ENCODE measurements at regions of chr22 and their contacts with region 1.

Region 1: DNA sequence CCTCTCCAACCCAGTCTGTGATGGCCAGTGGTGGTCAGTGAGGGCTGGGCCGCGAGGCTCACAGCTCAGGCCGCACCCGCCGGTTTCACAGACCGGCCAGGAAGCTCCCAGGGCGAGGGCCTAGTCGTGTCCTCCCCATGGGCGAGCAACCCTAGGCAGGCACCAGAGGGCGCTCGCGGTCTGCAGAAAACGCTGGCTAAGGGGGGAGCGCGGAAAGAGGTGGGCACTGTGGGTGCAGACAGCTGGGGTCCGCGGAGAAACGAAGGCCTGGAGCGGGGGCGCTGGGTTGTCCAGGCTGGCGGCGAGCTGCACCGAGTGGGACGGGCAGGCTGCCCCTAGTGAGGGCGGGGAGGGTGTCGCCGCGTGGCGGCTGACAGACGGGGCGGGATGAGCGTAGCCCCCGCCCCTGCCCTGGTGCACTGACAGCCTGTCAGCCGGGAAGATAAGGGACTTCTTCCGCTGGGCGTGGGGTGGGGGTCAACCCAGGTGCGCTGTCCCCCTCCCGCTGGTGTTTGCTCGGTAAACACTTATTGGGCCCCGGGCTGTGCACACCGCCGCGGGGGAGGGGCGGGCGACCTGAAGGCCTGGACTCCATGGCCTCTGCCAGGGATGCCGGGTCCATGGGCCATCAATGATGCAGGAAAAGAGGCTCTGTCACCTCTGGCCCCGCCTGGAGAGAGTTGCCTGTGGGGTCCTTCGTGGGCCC is 7.5 kb downstream of the GP1BB start:
- DNase-seq: peak; percentile 86
- ATAC-seq: peak; percentile 90
- H3K4me3 ChIP-seq: peak overlapping the region in 4 of 5 experiments; percentile 10 to 45 (median 34)
- H3K4me3 Mint-ChIP-seq: peak overlapping the region; percentile 84
- H3K27ac ChIP-seq: no peak overlapping the region
- H3K27ac Mint-ChIP-seq: no peak overlapping the region
- H3K4me1 ChIP-seq: peaks cover 6 to 9% of the 10 kb centered on the region in 2 donors
- H3K4me1 Mint-ChIP-seq: peaks cover 2% of the 10 kb centered on the region
- H3K27me3 ChIP-seq: peaks cover 0 to 9% (median 0%) of the 10 kb centered on the region in 4 experiments
- H3K27me3 Mint-ChIP-seq: peaks cover 3% of the 10 kb centered on the region
- CTCF ChIP-seq: peak; percentile 93

Region 2: GRCh38 chr22:19527861-19528417 is 202.9 kb before region 1 on chr22:
- CTCF ChIA-PET with region 1: no interaction called
- POLR2A ChIA-PET with region 1: no interaction called
- intact Hi-C with region 1: no loop called
- DNase-seq: no peak
- ATAC-seq: no peak
- H3K4me3 ChIP-seq: no peak overlapping the region
- H3K4me3 Mint-ChIP-seq: no peak overlapping the region
- H3K27ac ChIP-seq: no peak overlapping the region
- H3K27ac Mint-ChIP-seq: no peak overlapping the region
- H3K4me1 ChIP-seq: peaks cover 8 to 22% of the 10 kb centered on the region in 2 donors
- H3K4me1 Mint-ChIP-seq: peaks cover 12% of the 10 kb centered on the region
- H3K27me3 ChIP-seq: peaks cover 0 to 38% (median 5%) of the 10 kb centered on the region in 4 experiments
- H3K27me3 Mint-ChIP-seq: peaks cover 30% of the 10 kb centered on the region
- CTCF ChIP-seq: no peak

Region 3: DNA sequence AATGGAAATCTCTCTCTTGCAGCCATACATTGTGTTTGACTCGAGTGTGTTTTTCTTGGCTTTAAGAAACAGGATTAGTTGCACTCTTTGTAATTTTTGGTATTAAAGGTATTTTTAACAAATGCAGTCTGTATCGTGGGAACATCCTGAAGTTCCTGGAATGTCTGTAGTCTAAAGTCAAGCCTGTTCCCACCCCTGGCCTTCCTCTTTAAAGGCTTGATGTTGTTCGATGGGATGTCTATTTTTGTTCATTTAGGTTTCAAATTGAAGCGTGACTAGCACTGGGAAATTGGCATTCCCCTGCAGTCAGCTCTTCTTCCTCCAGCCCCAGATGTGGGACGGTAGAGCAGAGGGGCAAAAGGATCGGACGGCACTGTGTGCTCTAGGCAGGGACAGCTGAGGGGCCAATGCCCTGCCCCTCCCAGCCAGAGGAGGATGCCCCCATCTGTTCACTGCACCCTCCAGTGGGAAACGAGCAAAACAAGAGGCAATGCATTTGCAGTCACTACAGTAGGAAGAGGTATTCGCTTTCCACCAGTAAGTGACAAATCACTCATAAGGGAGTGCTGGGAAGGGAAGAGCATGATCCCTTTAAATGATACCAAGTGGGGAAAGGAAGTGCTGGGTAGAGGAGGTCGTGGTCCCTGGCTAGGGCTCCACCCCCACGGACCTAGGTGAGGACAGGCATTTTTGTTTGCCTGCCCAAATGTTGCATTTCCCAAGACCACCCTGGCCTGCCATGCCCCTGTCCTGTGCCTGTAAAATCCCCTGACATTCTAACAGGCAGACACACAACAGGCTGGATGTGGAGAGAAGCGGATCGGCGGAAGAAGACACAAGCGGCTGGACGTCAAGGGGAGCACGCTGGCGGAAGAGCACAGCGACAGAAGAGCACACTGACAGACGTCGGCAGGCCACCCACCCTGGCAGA is 63.9 kb before region 1 on chr22:
- CTCF ChIA-PET with region 1: no interaction called
- POLR2A ChIA-PET with region 1: no interaction called
- intact Hi-C with region 1: no loop called
- DNase-seq: no peak
- ATAC-seq: no peak
- H3K4me3 ChIP-seq: no peak overlapping the region
- H3K4me3 Mint-ChIP-seq: no peak overlapping the region
- H3K27ac ChIP-seq: no peak overlapping the region
- H3K27ac Mint-ChIP-seq: no peak overlapping the region
- H3K4me1 ChIP-seq: no peaks in the 10 kb centered on the region
- H3K4me1 Mint-ChIP-seq: no peaks in the 10 kb centered on the region
- H3K27me3 ChIP-seq: no peaks in the 10 kb centered on the region
- H3K27me3 Mint-ChIP-seq: peaks cover 9% of the 10 kb centered on the region
- CTCF ChIP-seq: no peak

Region 4: DNA sequence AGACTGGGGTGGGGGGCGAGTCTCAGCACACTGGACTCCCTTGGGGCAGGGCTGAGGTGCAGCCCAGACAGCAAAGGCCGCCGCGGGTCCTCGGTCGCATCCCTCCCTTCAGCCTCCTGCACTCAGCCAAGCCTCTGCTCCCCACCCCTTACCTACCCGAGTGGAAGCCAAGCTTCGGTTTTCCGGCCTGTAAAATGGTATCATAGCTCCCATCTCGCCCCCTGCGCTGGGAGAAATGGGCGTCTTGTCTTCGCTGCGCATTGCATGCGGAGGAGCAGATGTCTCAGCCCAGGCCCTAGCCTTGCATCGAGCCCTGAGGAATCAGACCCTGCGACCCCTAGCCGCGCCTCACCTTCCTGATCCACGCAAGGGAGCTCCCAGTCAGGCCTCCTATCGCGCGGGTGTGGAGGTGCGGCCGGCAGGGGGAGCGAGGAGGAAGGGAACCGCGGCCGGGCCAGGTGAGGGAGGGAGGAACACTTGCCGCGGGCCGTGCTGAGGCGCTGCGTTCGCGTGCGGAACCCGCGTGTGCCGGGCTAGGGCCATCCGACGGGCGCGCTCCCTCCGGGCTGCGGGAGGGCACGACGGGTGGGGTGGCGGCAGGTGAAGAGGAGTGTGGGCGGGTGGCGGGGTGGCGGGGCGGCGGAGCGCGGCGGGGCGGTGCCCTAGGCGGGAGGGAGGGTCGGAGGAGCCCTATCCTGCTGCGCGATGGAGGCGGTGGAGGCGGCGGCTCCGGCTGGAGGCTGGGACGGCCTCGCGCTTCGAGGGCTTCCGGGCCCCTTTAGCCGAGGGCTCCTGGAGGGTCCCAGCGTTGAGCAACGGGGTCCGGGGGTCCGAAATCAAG is 25.7 kb after region 1 on chr22:
- CTCF ChIA-PET with region 1: interaction called, 20 read pairs
- POLR2A ChIA-PET with region 1: no interaction called
- intact Hi-C with region 1: no loop called
- DNase-seq: peak; percentile 72
- ATAC-seq: peak; percentile 53
- H3K4me3 ChIP-seq: peak overlapping the region in 4 of 5 experiments; percentile 31 to 51 (median 41)
- H3K4me3 Mint-ChIP-seq: peak overlapping the region; percentile 83
- H3K27ac ChIP-seq: no peak overlapping the region
- H3K27ac Mint-ChIP-seq: no peak overlapping the region
- H3K4me1 ChIP-seq: peaks cover 34 to 46% of the 10 kb centered on the region in 2 donors
- H3K4me1 Mint-ChIP-seq: peaks cover 33% of the 10 kb centered on the region
- H3K27me3 ChIP-seq: peaks cover 0 to 78% (median 40%) of the 10 kb centered on the region in 4 experiments
- H3K27me3 Mint-ChIP-seq: peaks cover 50% of the 10 kb centered on the region
- CTCF ChIP-seq: peak; percentile 51

Region 5: GRCh38 chr22:19903031-19903430 is 172.2 kb after region 1 on chr22:
- CTCF ChIA-PET with region 1: interaction called, 10 read pairs
- POLR2A ChIA-PET with region 1: no interaction called
- intact Hi-C with region 1: no loop called
- DNase-seq: no peak
- ATAC-seq: no peak
- H3K4me3 ChIP-seq: no peak overlapping the region
- H3K4me3 Mint-ChIP-seq: no peak overlapping the region
- H3K27ac ChIP-seq: no peak overlapping the region
- H3K27ac Mint-ChIP-seq: no peak overlapping the region
- H3K4me1 ChIP-seq: no peaks in the 10 kb centered on the region
- H3K4me1 Mint-ChIP-seq: no peaks in the 10 kb centered on the region
- H3K27me3 ChIP-seq: no peaks in the 10 kb centered on the region
- H3K27me3 Mint-ChIP-seq: no peaks in the 10 kb centered on the region
- CTCF ChIP-seq: no peak

Region 6: GRCh38 chr22:19918332-19919106 is 187.7 kb after region 1 on chr22:
- CTCF ChIA-PET with region 1: interaction called, 210 read pairs
- POLR2A ChIA-PET with region 1: no interaction called
- intact Hi-C with region 1: no loop called
- DNase-seq: no peak
- ATAC-seq: no peak
- H3K4me3 ChIP-seq: no peak overlapping the region
- H3K4me3 Mint-ChIP-seq: no peak overlapping the region
- H3K27ac ChIP-seq: no peak overlapping the region
- H3K27ac Mint-ChIP-seq: no peak overlapping the region
- H3K4me1 ChIP-seq: no peaks in the 10 kb centered on the region
- H3K4me1 Mint-ChIP-seq: no peaks in the 10 kb centered on the region
- H3K27me3 ChIP-seq: no peaks in the 10 kb centered on the region
- H3K27me3 Mint-ChIP-seq: no peaks in the 10 kb centered on the region
- CTCF ChIP-seq: no peak

Measured in B cell (primary cell).